Activated CD4-positive, alpha-beta T cell treated with anti-CD3 and anti-CD28 coated beads, Interleukin-2, amount 10 ng/mL, durations not matched to agents 7 days and 5 days (primary cell): ENCODE measurements at regions of chr5 and their contacts with region 1.

Region 1: DNA sequence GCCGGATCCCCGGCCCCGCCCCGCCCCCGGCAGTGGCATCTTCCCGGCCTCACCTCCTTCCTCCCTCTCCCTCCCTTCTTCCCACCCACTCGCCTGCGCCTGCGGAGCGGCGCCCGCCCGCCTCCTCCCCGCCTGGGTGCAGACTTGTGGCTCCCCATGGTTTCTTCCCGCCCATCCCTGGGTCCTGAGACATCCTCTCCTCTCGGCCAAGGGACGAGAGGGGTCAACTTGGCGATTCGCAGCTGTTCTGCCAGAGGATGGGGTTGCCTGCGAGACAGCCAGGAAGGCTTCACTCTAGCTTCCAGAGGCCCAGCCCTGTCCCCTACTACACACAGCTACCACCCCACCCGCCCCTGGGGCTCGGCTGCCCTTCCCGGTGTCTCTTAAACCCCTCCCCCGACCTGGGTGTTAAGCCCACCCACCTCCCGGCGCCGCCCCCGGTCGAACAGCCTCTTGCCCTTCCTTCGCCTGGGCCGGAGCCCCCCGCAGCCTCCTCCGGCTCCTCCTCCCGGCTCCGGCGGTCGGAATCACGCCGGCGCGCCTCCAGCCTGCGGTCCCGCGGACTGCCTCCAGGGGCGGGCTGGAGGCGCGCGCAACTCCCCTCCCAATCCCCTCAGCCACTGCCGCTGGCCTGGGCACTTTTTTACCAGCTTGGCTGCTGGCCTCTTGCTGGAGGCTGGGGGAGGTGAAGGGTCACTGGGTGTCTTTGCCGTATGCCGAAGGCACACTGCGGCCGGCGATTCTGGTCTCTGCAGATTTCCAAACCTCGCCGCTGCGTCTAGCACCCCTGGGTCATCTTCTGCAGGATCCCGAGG is 1.9 kb downstream of the JADE2 start:
- DNase-seq: peak; percentile 61
- H3K4me3 Mint-ChIP-seq: peak overlapping the region; percentile 99
- H3K27ac Mint-ChIP-seq: peak overlapping the region; percentile 92
- H3K4me1 Mint-ChIP-seq: peaks cover 42% of the 10 kb centered on the region
- H3K27me3 Mint-ChIP-seq: peaks cover 3% of the 10 kb centered on the region

Region 2: GRCh38 chr5:134312796-134313195 is 214.6 kb before region 1 on chr5:
- CTCF ChIA-PET with region 1: no interaction called
- POLR2A ChIA-PET with region 1: no interaction called
- DNase-seq: no peak
- H3K4me3 Mint-ChIP-seq: no peak overlapping the region
- H3K27ac Mint-ChIP-seq: no peak overlapping the region
- H3K4me1 Mint-ChIP-seq: peaks cover 8% of the 10 kb centered on the region
- H3K27me3 Mint-ChIP-seq: no peaks in the 10 kb centered on the region

Region 3: GRCh38 chr5:134503088-134503946 is 24.0 kb before region 1 on chr5:
- CTCF ChIA-PET with region 1: interaction called, 10 read pairs
- POLR2A ChIA-PET with region 1: no interaction called
- DNase-seq: peak; percentile 71
- H3K4me3 Mint-ChIP-seq: peak overlapping the region; percentile 34
- H3K27ac Mint-ChIP-seq: peak overlapping the region; percentile 96
- H3K4me1 Mint-ChIP-seq: peaks cover 40% of the 10 kb centered on the region
- H3K27me3 Mint-ChIP-seq: no peaks in the 10 kb centered on the region

Region 4: DNA sequence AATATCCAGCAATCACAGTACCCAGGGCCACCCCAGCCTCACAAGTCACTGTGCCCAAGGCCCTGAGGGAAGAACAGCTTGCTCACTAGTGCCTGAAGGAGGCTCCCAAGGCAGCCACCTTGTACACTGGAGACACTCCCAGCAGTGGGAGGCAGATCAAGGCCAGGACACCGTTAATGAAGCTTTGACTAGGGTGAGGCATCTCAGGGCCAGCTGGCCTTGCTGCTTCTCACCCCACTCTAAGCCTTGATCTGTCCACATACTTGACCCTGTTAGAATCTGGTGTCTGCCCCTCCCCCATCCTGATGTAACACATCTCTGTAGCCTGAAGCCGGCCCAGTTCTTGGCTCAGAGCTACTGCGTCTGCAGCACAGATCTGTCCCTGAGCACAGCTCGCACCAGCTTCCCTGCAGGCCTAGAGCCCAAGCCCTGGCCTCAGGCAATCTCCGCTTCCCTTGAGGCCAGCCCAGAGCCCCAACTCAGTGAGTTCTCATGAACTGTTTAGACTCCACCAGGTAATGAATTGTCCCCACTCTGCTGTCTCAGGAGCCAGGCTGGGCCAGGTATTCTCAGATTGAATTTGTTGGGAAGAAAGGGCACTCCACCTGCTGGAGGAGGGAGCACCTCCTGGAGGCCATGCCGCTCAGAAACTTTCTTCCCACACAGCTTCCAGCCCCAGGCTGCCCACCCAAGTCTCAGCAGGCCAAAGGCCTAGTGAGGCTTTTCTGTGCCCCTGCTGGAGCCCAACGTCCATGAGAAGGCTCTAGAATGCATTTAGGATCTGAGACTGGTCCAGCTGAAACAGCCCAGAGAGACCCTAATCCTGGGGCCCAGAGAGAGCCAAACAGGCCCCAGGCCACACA is 15.3 kb before region 1 on chr5:
- CTCF ChIA-PET with region 1: interaction called, 15 read pairs
- POLR2A ChIA-PET with region 1: no interaction called
- DNase-seq: no peak
- H3K4me3 Mint-ChIP-seq: no peak overlapping the region
- H3K27ac Mint-ChIP-seq: peak overlapping the region; percentile 10
- H3K4me1 Mint-ChIP-seq: peaks cover 14% of the 10 kb centered on the region
- H3K27me3 Mint-ChIP-seq: no peaks in the 10 kb centered on the region

Region 5: GRCh38 chr5:134541736-134542376 is 14.5 kb after region 1 on chr5:
- CTCF ChIA-PET with region 1: interaction called, 35 read pairs
- POLR2A ChIA-PET with region 1: interaction called, 3 read pairs
- DNase-seq: no peak
- H3K4me3 Mint-ChIP-seq: no peak overlapping the region
- H3K27ac Mint-ChIP-seq: no peak overlapping the region
- H3K4me1 Mint-ChIP-seq: peaks cover 37% of the 10 kb centered on the region
- H3K27me3 Mint-ChIP-seq: no peaks in the 10 kb centered on the region

Region 6: GRCh38 chr5:134594797-134595457 is 67.6 kb after region 1 on chr5:
- CTCF ChIA-PET with region 1: no interaction called
- POLR2A ChIA-PET with region 1: no interaction called
- DNase-seq: peak; percentile 45
- H3K4me3 Mint-ChIP-seq: no peak overlapping the region
- H3K27ac Mint-ChIP-seq: peak overlapping the region; percentile 79
- H3K4me1 Mint-ChIP-seq: peaks cover 33% of the 10 kb centered on the region
- H3K27me3 Mint-ChIP-seq: no peaks in the 10 kb centered on the region